Left colon (tissue), 2 donors: ENCODE measurements at regions of chr9 and their contacts with region 1.

Region 1: GRCh38 chr9:125407974-125408900 is 146.6 kb downstream of the GAPVD1 start:
- DNase-seq: peak in 1 of 2 donors; percentile 87
- ATAC-seq: peak; percentile 86

Region 2: GRCh38 chr9:125617087-125617486 is 208.8 kb after region 1 on chr9:
- intact Hi-C with region 1: no loop called
- DNase-seq: no peak
- ATAC-seq: no peak

Region 3: GRCh38 chr9:125631391-125632085 is 223.3 kb after region 1 on chr9:
- intact Hi-C with region 1: loop called in 1 of 2 experiments (anchors 10 kb)
- DNase-seq: peak in 1 of 2 donors; percentile 19
- ATAC-seq: peak; percentile 84

Region 4: GRCh38 chr9:125674981-125675973 is 267.0 kb after region 1 on chr9:
- intact Hi-C with region 1: no loop called
- DNase-seq: no peak
- ATAC-seq: no peak

Region 5: GRCh38 chr9:125732562-125732961 is 324.3 kb after region 1 on chr9:
- intact Hi-C with region 1: no loop called
- DNase-seq: no peak
- ATAC-seq: no peak

Region 6: DNA sequence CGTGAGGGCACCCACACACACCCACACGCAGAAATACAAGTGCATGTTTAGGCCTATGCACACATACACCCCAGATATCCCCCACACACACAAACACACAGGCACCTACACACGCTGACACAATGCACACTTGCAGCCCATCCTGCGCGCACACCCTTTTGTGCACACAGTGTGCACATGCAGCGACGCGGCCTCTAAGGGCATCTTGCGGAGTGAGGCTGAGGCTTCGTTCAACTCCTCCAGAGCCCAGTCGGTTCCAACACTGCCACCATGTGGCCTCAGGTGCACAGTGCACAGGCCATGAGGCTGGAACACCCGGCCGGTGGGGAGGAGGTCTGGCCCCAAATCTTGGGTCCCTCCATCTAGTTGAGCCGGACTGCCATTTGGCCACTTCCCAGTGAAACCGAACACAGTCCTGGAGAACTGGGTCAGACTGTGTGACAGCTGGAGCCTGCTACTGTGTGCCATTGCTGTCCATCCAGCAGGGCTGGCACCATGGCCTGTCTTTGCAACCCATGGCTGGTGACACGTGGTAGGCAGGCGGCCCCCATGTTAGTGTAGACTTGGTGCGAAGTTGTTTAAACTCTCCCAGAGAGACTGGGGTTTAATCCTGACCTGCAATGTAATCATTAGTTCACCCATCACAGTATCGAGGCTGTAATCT is 820.7 kb after region 1 on chr9:
- intact Hi-C with region 1: loop called (anchors 5 to 10 kb)
- DNase-seq: peak; percentile 53 to 77
- ATAC-seq: peak; percentile 97